Activated CD4-positive, alpha-beta T cell treated with anti-CD3 and anti-CD28 coated beads for 36 hours (primary cell): ENCODE measurements at regions of chr1 and their contacts with region 1.

Region 1: GRCh38 chr1:112110031-112110430 is 120.6 kb upstream of the KCND3 start:
- DNase-seq: no peak
- ATAC-seq: no peak
- H3K4me3 Mint-ChIP-seq: no peak overlapping the region
- H3K27ac Mint-ChIP-seq: no peak overlapping the region
- H3K4me1 Mint-ChIP-seq: peaks cover 4% of the 10 kb centered on the region
- H3K27me3 Mint-ChIP-seq: peaks cover 32% of the 10 kb centered on the region

Region 2: DNA sequence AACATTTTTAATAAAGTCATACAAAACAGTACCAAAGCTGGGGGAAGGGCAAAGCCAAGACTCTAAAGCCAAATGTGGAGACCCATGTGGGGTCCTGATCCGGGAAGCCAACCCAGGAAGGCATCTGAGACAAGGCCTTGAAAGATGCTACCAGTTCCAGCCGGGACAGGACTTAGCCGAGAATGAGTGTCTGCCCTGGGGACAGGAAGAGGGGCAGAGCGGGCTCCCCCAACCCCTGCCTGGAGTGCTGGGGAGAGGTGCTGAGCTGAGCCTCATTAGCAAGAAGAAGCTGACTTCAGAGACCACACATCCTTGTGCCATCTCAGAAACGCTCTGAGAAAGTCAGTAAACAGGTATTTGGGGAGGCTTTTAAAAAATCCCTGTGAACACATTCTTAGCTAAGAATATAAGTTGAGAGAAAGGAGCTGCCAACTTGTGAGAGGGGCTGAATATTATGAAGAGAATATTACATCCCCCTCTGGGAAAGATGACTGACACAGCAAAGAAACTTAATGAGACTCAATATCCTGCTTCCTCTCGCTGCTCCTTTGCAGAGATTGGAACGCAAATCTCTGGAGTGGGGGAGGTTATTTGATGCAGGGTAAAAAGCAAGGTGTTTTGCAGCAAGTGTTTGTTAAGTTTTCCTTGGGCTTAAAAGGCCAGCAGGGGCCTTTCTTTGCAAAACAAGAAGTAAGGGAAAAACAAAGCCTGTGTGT is 17.2 kb before region 1 on chr1:
- CTCF ChIA-PET with region 1: no interaction called
- POLR2A ChIA-PET with region 1: no interaction called
- intact Hi-C with region 1: loop called in 1 of 2 experiments (anchors 1 kb)
- DNase-seq: no peak
- ATAC-seq: no peak
- H3K4me3 Mint-ChIP-seq: no peak overlapping the region
- H3K27ac Mint-ChIP-seq: no peak overlapping the region
- H3K4me1 Mint-ChIP-seq: no peaks in the 10 kb centered on the region
- H3K27me3 Mint-ChIP-seq: peaks cover 32% of the 10 kb centered on the region